ENCODE measurements at regions of chr1 and their contacts with region 1.

Region 1: GRCh38 chr1:51997974-51998382 is 7.5 kb upstream of the RAB3B start:
- DNase-seq: no peak
- H3K4me3 ChIP-seq: no peak overlapping the region
- H3K27ac ChIP-seq: no peak overlapping the region
- H3K4me1 ChIP-seq: no peaks in the 10 kb centered on the region
- H3K27me3 ChIP-seq: peaks cover 0 to 13% (median 0%) of the 10 kb centered on the region in 3 donors
- CTCF ChIP-seq: no peak
- EP300 ChIP-seq: no peak
- POLR2A ChIP-seq: no peak

Region 2: DNA sequence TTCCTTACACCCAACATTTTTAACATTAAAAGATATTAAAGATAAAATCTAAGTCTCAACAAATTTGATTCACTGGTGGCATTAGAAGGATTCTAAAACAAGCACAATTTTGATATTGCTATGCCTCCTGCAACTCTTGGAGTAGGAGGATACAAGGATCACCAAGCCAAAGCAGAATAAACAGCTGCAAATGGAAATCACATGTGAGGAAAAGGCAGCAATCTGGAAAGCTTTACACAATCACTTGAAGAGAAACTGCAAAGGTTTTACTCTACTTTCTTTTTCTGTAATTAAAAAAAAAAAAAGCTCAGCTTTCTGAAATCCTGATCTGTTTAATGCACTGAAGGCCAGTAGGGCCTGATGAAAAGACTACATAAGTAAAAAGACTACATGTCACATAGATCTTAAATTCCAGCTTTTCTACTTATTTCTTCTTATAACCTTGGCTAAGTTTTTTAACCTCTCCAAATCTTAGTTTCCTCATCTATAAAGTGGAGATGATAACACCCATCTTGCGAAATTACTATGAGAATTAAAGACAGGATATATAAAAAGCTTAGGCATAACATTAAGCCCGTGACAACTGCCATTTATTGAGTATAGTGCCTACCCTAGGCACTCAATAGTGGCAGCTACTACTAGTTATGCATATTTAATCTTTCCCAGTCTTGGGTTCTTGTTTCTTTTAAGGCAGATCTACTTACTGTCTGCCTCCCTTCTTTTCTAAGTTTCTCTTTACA is 552.5 kb before region 1 on chr1:
- intact Hi-C with region 1: no loop called
- DNase-seq: peak in 1 of 2 donors; percentile 17
- H3K4me3 ChIP-seq: no peak overlapping the region
- H3K27ac ChIP-seq: peak overlapping the region in 2 of 5 donors; percentile 11 to 29
- H3K4me1 ChIP-seq: peaks cover 4 to 38% (median 23%) of the 10 kb centered on the region in 4 donors
- H3K27me3 ChIP-seq: no peaks in the 10 kb centered on the region
- CTCF ChIP-seq: no peak
- EP300 ChIP-seq: no peak
- POLR2A ChIP-seq: no peak

Region 3: DNA sequence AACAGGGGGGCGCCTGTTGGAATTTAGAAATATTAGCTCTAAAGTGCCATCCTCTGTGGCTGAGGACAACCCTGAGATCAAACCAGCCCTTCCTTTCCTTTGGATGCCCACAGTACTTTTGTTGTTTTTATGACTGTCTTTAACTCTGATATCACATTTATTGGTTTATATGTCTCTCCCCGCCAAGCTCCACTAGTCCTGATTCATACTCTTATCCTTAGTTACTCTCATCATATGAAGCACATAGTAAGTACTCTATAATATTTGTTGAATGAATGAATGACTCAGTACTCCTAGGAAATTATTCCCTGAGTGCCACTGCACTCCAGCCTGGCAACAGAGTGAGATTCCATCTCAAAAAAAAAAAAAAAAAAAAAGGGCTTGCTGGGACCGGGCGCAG is 96.8 kb before region 1 on chr1:
- intact Hi-C with region 1: loop called (anchors 5 kb)
- DNase-seq: no peak
- H3K4me3 ChIP-seq: no peak overlapping the region
- H3K27ac ChIP-seq: no peak overlapping the region
- H3K4me1 ChIP-seq: no peaks in the 10 kb centered on the region
- H3K27me3 ChIP-seq: peaks cover 0 to 51% (median 3%) of the 10 kb centered on the region in 3 donors
- CTCF ChIP-seq: no peak
- EP300 ChIP-seq: no peak
- POLR2A ChIP-seq: no peak

Measured in stomach (tissue), 19 donors.